Activated CD8-positive, alpha-beta T cell treated with anti-CD3 and anti-CD28 coated beads for 36 hours (primary cell): ENCODE measurements at regions of chr19 and their contacts with region 1.

Region 1: DNA sequence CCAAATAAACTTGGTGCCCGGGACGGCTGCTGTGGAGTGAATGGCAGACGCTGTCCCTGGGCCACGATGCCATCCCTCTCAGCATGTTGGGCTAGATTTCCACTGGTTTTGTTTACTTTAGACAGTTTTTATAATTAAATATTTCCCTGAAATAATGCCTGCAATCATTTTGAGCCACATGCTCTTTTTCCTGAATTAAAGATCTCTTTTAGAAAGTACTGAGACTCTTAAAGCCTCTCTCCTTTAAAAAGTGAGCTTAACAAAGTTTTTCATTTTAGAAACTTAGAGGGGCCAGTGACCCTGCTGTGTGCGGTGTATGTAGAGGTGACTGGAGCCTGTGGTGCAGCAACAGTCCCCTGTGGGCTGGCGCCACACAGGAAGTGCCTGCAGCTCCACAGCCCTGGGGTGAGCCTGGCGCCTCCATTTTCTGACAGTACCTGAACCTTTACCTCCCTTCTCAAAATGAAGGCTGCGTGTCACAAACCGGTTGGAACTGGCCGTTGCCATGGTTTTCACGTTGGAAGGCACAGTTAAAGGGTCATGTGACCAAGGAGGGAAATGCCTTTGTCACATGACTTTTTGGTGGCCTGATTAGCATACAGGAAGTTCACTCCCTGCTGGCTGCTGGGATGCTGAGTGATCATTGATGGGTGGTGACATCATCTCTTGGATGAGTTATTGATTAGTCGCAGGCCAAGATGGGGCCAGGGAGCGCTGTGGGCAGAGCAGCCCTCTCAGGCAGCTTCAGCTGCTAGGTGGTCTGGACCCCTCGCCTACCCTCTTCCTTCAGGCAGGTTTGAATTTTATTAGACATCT is 26.3 kb downstream of the TSSK6 start:
- DNase-seq: peak; percentile 96
- ATAC-seq: peak; percentile 90
- H3K4me3 Mint-ChIP-seq: peak overlapping the region; percentile 39
- H3K27ac Mint-ChIP-seq: peak overlapping the region; percentile 82
- H3K4me1 Mint-ChIP-seq: peaks cover 64% of the 10 kb centered on the region
- H3K27me3 Mint-ChIP-seq: no peaks in the 10 kb centered on the region
- CTCF ChIP-seq: no peak

Region 2: DNA sequence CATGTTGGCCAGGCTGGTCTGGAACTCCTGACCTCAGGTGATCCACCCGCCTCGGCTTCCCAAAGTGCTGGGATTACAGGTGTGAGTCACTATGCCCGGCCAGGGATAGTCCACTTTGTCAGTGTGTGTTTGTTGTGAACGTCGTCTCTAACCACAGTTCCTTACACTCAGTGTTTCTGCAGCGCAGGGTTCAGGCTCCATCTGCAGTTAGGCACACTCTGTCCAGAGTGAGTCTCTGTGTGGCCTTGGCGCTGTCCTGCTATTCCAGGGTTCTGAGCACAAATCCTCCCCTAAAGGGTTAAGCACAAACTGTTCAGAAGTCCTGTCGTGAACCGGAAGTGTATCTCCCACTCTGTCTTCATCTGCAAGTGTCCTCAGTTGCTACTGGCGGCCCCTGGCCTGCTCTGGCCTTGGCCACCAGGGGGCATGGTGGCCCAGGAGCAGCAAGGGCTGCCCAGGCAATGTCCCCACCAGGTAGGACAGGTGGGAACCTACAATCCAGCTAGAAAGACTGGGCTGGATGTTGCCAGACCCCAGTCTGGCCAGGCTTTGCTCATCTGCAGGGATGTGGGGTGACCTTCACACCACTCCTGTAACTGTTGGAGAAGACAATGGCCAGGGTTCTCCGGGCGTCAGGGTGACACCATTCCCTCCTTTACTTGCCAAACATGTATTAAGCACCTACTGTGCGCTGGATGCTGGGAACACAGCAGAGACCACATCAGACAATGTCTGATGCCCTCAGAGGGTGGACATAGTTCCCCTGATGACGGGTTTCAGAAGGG is 122.3 kb before region 1 on chr19:
- CTCF ChIA-PET with region 1: interaction called, 135 read pairs
- POLR2A ChIA-PET with region 1: interaction called, 3 read pairs
- intact Hi-C with region 1: loop called (anchors 5 kb)
- DNase-seq: peak; percentile 82
- ATAC-seq: peak; percentile 83
- H3K4me3 Mint-ChIP-seq: peak overlapping the region; percentile 20
- H3K27ac Mint-ChIP-seq: peak overlapping the region; percentile 53
- H3K4me1 Mint-ChIP-seq: peaks cover 16% of the 10 kb centered on the region
- H3K27me3 Mint-ChIP-seq: no peaks in the 10 kb centered on the region
- CTCF ChIP-seq: peak; percentile 79

Region 3: GRCh38 chr19:19385108-19385899 is 103.8 kb before region 1 on chr19:
- CTCF ChIA-PET with region 1: interaction called, 22 read pairs
- POLR2A ChIA-PET with region 1: interaction called, 5 read pairs
- intact Hi-C with region 1: loop called (anchors 5 kb)
- DNase-seq: peak; percentile 100
- ATAC-seq: peak; percentile 93
- H3K4me3 Mint-ChIP-seq: peak overlapping the region; percentile 72
- H3K27ac Mint-ChIP-seq: peak overlapping the region; percentile 86
- H3K4me1 Mint-ChIP-seq: peaks cover 33% of the 10 kb centered on the region
- H3K27me3 Mint-ChIP-seq: no peaks in the 10 kb centered on the region
- CTCF ChIP-seq: no peak

Region 4: GRCh38 chr19:19410275-19411192 is 78.5 kb before region 1 on chr19:
- CTCF ChIA-PET with region 1: interaction called, 24 read pairs
- POLR2A ChIA-PET with region 1: interaction called, 10 read pairs
- intact Hi-C with region 1: loop called (anchors 2 kb)
- DNase-seq: peak; percentile 73
- ATAC-seq: peak; percentile 75
- H3K4me3 Mint-ChIP-seq: no peak overlapping the region
- H3K27ac Mint-ChIP-seq: peak overlapping the region; percentile 62
- H3K4me1 Mint-ChIP-seq: peaks cover 74% of the 10 kb centered on the region
- H3K27me3 Mint-ChIP-seq: no peaks in the 10 kb centered on the region
- CTCF ChIP-seq: no peak

Region 5: DNA sequence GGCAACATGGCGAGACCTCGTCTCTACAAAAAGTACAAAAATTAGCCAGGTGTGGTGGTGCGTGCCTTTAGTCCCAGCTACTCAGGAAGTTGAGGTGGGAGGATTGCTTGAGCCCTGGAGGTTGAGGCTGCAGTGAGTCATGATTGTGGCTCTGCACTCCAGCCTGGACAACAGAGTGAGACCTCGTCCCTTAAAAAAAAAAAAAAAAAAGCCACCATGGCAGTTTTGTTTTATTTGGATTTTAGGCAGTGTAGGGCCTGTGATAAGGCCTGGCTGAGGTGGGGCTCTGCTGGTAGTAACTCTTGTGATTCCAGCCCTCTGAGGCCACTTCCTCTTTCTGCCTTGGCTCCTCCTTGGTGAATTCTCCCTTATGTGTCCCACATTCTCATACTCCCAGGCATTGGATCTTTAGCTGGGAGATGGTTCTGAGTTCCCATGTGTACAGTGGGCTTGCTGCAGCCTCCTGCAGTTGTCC is 44.4 kb before region 1 on chr19:
- CTCF ChIA-PET with region 1: interaction called, 13 read pairs
- POLR2A ChIA-PET with region 1: interaction called, 3 read pairs
- intact Hi-C with region 1: no loop called
- DNase-seq: peak; percentile 46
- ATAC-seq: peak; percentile 17
- H3K4me3 Mint-ChIP-seq: no peak overlapping the region
- H3K27ac Mint-ChIP-seq: peak overlapping the region; percentile 72
- H3K4me1 Mint-ChIP-seq: peaks cover 73% of the 10 kb centered on the region
- H3K27me3 Mint-ChIP-seq: no peaks in the 10 kb centered on the region
- CTCF ChIP-seq: no peak

Region 6: DNA sequence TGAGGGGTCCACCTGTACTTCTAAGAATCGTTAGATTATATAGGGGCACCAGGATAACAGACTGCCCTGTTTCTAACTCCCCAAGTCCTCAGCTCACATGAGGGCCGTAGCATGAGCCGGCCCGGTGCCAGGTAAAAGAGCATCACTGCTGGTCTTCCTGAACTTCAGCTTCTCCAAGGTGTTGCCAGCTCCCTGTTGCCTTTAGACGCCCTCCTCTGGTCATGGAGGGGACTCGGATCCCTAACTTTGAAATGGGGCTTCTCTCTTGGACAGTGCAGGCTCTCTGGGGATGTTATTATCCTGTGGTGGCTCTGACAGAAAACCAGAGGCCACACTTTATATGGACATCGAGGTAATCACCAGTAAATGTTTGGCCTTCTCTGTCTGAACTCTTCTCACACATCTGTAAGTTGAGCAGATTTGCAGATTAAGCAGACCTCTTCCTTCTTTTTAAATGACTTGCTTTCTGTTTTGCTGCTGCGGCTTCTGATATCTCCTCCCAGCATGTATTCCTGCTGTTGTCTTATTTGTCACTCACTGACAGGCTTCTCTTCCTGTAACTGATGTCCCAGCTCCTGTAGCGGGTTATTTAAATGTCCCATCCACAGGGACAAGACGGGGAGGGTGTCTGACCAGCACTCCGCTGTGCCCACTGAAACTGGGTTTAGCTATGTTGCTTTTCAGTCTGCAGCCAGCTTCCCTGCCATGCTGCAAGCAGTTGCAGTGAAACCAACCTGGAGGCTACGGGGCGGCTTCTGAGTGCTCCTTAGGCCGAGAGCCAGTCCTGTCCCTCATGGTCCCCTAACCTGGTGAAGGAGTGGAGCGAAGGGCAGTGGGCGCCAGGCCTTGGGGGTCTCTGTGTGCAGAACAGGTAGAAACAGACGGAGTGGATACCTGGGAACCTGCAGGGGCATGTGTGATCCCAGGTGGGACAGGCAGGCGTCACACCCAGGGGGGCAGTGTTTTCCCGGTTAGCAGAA is 12.9 kb before region 1 on chr19:
- CTCF ChIA-PET with region 1: interaction called, 19 read pairs
- POLR2A ChIA-PET with region 1: interaction called, 4 read pairs
- intact Hi-C with region 1: no loop called
- DNase-seq: no peak
- ATAC-seq: no peak
- H3K4me3 Mint-ChIP-seq: no peak overlapping the region
- H3K27ac Mint-ChIP-seq: peak overlapping the region; percentile 71
- H3K4me1 Mint-ChIP-seq: peaks cover 77% of the 10 kb centered on the region
- H3K27me3 Mint-ChIP-seq: no peaks in the 10 kb centered on the region
- CTCF ChIP-seq: no peak

Region 7: GRCh38 chr19:19499272-19499995 is 10.4 kb after region 1 on chr19:
- CTCF ChIA-PET with region 1: no interaction called
- POLR2A ChIA-PET with region 1: no interaction called
- intact Hi-C with region 1: no loop called
- DNase-seq: no peak
- ATAC-seq: no peak
- H3K4me3 Mint-ChIP-seq: no peak overlapping the region
- H3K27ac Mint-ChIP-seq: no peak overlapping the region
- H3K4me1 Mint-ChIP-seq: no peaks in the 10 kb centered on the region
- H3K27me3 Mint-ChIP-seq: no peaks in the 10 kb centered on the region
- CTCF ChIP-seq: no peak

Region 8: GRCh38 chr19:19547674-19548336 is 58.7 kb after region 1 on chr19:
- CTCF ChIA-PET with region 1: no interaction called
- POLR2A ChIA-PET with region 1: no interaction called
- intact Hi-C with region 1: no loop called
- DNase-seq: no peak
- ATAC-seq: no peak
- H3K4me3 Mint-ChIP-seq: no peak overlapping the region
- H3K27ac Mint-ChIP-seq: no peak overlapping the region
- H3K4me1 Mint-ChIP-seq: no peaks in the 10 kb centered on the region
- H3K27me3 Mint-ChIP-seq: no peaks in the 10 kb centered on the region
- CTCF ChIP-seq: no peak

Region 9: DNA sequence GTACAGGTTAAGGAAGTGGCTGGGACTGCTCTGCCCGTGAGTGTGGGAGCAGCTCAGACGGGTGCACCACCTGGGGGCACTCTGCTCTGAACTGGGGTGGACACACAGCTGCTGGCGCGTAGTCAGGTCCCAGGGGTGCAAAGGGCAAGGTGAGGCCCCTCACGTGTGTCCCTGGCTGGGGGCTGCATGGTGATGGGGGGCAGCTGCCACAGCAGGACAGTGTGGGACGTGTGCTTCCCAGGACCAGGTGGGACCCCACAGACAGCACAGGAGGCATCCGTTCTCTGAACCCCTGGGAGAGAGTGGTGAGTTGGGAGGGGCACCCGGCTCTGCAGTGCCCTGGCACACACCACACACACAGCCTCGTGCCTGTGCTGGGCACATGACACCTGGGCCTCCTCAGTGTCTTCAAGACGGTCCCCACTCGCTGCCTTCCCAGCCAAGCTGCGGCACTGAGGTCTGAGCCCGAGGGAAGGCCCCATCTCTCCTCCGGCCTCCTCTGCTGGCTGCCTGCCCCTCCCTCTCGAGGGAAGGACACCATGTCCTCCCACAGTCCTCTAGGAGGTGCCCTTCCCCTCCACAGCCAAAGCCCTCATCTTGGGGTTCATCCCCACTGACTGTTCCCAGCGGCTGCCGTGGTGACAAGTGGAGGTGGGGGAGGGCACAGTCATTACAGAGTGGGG is 73.7 kb after region 1 on chr19:
- CTCF ChIA-PET with region 1: no interaction called
- POLR2A ChIA-PET with region 1: no interaction called
- intact Hi-C with region 1: no loop called
- DNase-seq: peak; percentile 46
- ATAC-seq: peak; percentile 84
- H3K4me3 Mint-ChIP-seq: no peak overlapping the region
- H3K27ac Mint-ChIP-seq: no peak overlapping the region
- H3K4me1 Mint-ChIP-seq: no peaks in the 10 kb centered on the region
- H3K27me3 Mint-ChIP-seq: no peaks in the 10 kb centered on the region
- CTCF ChIP-seq: no peak